ENCODE measurements at regions of chr1 and their contacts with region 1.

Region 1: DNA sequence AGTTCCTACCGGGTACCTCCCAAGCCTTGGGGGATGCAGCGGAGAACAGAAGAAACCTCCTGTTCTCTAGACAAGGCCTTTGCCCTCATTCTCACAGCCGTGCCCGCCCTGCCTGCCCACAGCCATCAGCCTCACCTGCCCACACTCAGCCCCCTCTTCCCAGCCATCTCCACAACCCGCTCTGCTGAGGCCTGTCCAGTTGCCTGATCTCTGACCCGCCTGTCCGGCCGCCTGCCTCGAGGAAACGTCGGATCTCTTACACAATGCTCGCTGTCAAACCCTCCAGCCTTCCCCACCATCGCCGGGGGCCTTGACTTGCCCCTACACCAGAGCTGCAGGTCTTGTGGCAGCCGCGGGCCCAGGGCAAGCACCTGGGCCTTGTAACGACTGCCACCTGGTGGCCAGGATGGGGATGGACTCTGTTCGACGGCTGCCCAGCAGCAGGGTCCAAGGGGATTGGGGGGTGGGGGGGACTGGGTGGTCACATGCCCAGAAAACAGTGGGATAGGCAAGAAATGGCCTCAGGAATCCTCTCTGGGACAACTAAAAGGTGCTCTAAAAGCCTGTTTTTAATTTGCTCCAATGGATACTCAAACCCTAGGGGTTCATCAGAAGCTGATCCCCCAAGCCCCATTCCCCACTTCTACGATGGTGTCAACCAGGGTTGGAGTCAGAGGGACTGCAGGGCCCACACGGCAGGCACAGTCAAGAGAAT is 31.0 kb downstream of the SLC45A1 start:
- DNase-seq: peak; percentile 74
- H3K27ac ChIP-seq: 0 out of 2 replicates have a peak overlapping the region, but pooled peaks have one; percentile 2
- CTCF ChIP-seq: peak; percentile 90

Region 2: DNA sequence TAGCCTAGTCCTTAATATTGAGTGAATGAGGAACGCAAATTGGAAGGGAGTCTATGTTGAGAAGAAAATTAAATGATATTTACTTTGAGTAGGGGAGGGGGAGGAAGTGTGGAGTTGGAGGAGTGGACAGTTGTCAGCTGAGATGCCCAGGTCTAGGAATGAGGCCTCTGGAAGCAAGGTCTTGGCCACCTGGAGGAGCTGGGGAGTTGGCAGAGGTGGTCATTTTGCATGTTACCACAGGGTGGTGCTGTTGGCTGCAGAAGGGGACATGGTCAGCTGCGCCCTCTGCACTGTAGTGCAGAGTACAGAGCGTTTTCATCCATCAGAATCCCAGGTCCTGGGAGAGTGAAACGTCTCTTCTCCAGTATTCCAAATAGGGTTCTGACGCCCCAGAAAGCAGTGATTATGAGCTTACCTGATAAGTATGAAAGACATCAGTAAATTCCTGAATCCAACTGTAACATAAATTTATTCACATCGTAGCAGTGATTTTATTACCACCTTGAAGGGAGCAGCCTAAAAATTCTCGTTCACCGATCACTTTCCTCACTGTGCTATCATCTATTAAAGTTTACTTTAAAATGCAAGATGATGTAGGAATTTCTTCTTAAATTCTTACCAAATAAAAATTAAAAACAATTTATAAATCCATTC is 373.6 kb before region 1 on chr1:
- CTCF ChIA-PET with region 1: interaction called, 17 read pairs
- POLR2A ChIA-PET with region 1: no interaction called
- DNase-seq: peak; percentile 85
- H3K27ac ChIP-seq: peak overlapping the region; percentile 57
- CTCF ChIP-seq: peak; percentile 92

Region 3: GRCh38 chr1:8015036-8015808 is 333.7 kb before region 1 on chr1:
- CTCF ChIA-PET with region 1: interaction called, 11 read pairs
- POLR2A ChIA-PET with region 1: no interaction called
- DNase-seq: peak; percentile 58
- H3K27ac ChIP-seq: no peak overlapping the region
- CTCF ChIP-seq: peak; percentile 69

Measured in RWPE1 (cell line).